ENCODE measurements at regions of chr5 and their contacts with region 1.

Region 1: DNA sequence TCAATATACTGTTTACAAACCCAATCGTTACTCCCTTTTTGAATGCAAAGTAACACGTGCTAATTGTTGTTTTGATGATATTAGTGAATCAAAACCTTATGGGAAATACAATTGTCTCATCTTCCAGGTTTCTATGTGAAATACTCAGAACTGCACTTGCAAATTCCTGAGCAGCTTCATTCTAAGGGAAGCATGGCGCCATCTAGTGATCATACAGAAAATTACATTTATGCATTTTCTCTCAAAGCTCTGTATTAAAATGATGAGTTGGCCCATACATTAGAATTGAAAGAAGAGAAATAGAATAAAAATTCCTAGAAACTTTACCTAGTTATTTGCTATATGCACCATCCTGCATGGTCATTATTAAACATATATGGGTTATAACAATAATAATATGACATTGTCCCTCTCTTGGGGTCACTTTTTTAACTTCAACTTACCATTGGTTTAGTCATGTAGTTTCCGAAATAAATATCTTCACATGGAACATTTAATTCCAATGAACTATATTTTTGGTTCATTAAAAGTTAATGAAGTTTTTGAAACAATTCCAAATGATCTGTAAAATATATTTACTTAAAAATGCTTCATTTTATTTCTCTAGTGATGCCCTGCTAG is 220.0 kb downstream of the PDE4D start:
- DNase-seq: no peak
- H3K4me3 ChIP-seq: no peak overlapping the region
- H3K27ac ChIP-seq: no peak overlapping the region
- H3K4me1 ChIP-seq: no peaks in the 10 kb centered on the region
- H3K27me3 ChIP-seq: no peaks in the 10 kb centered on the region
- CTCF ChIP-seq: peak; percentile 43 to 89 (median 76)
- POLR2A ChIP-seq: no peak

Region 2: GRCh38 chr5:59390074-59390659 is 283.4 kb before region 1 on chr5:
- intact Hi-C with region 1: loop called (anchors 5 kb)
- DNase-seq: no peak
- H3K4me3 ChIP-seq: no peak overlapping the region
- H3K27ac ChIP-seq: no peak overlapping the region
- H3K4me1 ChIP-seq: no peaks in the 10 kb centered on the region
- H3K27me3 ChIP-seq: no peaks in the 10 kb centered on the region
- CTCF ChIP-seq: peak; percentile 29 to 66 (median 51)
- POLR2A ChIP-seq: no peak

Region 3: DNA sequence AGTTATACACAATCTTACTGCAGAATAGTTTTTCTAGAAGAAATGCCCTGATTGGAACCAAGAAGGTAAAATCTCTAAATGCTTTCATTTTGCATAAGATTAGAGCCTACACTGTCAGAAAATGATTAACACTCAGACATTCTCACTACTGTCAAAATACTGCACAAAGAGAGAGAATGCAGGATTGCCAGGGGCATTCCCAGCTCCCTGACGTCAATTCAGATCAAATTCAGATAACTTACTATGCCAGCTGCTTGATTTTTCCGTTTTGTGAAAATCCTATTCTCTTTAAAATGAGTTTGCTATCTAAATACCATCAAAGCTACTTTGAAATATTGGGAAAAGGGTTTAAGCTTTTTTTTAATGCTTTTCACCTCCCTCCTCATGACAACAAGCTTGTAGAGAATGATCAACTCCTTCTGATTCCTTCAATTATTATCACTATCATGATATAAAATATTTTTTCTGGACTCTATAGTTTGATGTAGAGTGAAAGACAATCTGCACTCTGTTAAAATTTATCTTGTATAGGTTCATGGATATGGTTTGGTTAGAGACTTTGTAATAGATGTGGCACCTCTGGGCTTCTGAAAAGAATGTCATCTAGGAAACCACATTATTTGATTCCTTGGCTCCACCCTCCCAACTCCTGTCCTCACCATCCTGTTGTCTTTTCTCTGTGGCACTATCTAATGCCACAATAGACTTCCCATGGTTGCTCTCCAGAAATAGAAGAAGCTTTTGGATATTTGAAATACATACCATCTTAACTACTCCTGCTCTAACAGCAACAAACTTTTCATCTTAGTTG is 187.7 kb before region 1 on chr5:
- intact Hi-C with region 1: no loop called
- DNase-seq: no peak
- H3K4me3 ChIP-seq: no peak overlapping the region
- H3K27ac ChIP-seq: no peak overlapping the region
- H3K4me1 ChIP-seq: peaks cover 3 to 5% of the 10 kb centered on the region in 2 donors
- H3K27me3 ChIP-seq: no peaks in the 10 kb centered on the region
- CTCF ChIP-seq: no peak
- POLR2A ChIP-seq: no peak

Region 4: GRCh38 chr5:59506285-59506877 is 167.2 kb before region 1 on chr5:
- intact Hi-C with region 1: loop called (anchors 10 kb)
- DNase-seq: no peak
- H3K4me3 ChIP-seq: no peak overlapping the region
- H3K27ac ChIP-seq: no peak overlapping the region
- H3K4me1 ChIP-seq: no peaks in the 10 kb centered on the region
- H3K27me3 ChIP-seq: no peaks in the 10 kb centered on the region
- CTCF ChIP-seq: peak in 3 of 6 experiments; percentile 44 to 48 (median 46)
- POLR2A ChIP-seq: no peak